Ascending aorta (tissue), 2 donors: ENCODE measurements at regions of chr3 and their contacts with region 1.

Region 1: DNA sequence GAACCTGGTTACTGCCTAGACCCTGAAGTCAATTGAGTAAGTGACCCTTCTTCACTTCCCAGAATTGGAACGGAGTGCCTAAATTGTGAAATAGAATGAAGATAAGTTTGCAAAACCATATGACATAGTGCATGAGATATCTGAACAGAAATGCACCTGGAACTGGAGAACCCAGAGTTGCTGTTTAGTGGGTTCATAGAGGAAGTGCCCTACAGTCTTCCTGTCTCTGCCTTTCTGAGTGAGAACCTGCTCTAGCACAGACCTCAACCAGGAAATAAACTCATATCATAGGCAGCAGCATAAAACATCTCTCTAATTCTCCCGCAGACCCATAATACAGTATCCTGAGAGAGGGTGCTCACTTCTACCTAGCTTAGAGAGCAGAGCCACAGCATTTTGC is 82.9 kb downstream of the EOMES start:
- DNase-seq: no peak
- H3K4me3 ChIP-seq: no peak overlapping the region
- H3K27ac ChIP-seq: peak overlapping the region in 1 of 2 donors; percentile 83
- H3K4me1 ChIP-seq: peaks cover 4 to 18% of the 10 kb centered on the region in 2 donors
- H3K27me3 ChIP-seq: no peaks in the 10 kb centered on the region
- CTCF ChIP-seq: no peak

Region 2: DNA sequence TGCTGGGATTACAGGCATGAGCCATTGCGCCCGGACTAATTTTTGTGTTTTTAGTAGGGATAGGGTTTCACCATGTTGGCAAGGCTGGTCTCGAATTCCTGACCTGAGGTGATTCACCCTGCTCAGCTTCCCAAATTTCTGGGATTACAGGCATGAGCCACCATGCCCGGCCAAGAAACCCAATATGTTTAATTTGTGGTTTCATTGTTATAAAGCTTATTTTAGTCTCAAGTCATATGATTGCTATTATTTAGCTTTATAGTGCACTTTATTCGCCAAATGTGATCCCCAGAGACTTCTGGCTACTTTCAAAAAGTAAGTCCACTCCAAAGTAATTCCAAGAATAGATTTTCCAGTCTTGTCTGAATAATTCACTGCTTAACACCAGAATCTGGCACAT is 135.7 kb before region 1 on chr3:
- intact Hi-C with region 1: loop called (anchors 5 kb)
- DNase-seq: peak; percentile 38 to 89
- H3K4me3 ChIP-seq: no peak overlapping the region
- H3K27ac ChIP-seq: peak overlapping the region; percentile 70 to 84
- H3K4me1 ChIP-seq: peaks cover 6 to 13% of the 10 kb centered on the region in 2 donors
- H3K27me3 ChIP-seq: no peaks in the 10 kb centered on the region
- CTCF ChIP-seq: no peak

Region 3: DNA sequence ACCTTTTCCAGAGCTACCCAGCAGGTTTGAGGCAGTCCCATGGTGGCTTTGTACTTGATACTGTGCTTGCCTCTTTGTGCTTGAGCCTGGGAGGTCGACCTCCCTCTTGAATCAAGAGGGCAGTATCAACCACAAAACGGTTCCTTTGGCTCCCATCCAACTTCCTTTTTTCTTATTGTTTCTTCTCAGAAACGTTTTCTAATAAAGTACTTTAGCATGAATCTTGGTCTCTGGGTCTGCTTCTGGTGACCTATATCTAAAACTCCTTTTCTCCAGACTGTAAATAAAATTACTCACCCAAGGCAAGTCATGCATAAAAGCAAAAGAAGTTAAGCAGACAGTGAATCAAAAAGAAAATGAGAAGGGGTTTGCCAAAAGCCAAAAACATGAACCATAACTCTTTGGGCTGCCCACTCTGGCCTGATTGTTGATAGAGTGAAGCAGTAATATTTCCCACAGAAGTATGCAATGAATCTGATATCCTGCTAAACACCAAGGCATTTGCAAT is 42.9 kb before region 1 on chr3:
- intact Hi-C with region 1: no loop called
- DNase-seq: no peak
- H3K4me3 ChIP-seq: no peak overlapping the region
- H3K27ac ChIP-seq: peak overlapping the region; percentile 4 to 67
- H3K4me1 ChIP-seq: peaks cover 5 to 15% of the 10 kb centered on the region in 2 donors
- H3K27me3 ChIP-seq: no peaks in the 10 kb centered on the region
- CTCF ChIP-seq: no peak